GM13976 (cell line): ENCODE measurements at regions of chr15 and their contacts with region 1.

Region 1: GRCh38 chr15:51982013-51982769 is 10.6 kb upstream of the LEO1 start:
- DNase-seq: peak; percentile 78
- CTCF ChIP-seq: peak; percentile 49

Region 2: DNA sequence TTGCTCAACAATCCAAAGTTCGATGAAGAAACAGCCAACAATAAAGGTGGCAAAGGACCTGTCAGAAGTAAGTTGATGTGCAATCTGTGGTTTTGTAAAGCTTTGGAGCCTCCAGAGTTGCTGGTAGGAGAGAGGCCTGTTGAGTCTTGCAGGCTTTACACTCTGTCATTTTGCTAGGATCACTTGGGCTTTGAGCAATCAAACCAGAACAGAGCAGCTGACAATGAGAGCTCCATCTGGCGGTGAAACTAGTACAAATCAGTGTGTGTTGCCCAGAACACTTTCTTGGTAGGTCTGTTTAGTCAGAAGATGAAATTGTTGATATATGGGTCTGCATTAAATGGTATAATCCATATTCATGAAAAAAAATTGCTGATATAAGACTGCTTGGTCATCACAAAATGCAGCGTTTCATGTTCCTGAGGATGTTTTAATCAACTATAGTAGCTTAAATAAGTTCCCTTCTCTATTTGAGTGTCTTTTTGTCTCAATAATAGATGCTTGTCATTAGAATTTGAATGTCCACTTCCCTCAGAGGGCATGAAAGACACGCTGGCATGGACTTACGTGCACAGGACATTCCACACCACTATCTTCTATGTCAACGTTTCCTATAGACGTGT is 205.1 kb before region 1 on chr15:
- in situ Hi-C with region 1: no loop called
- DNase-seq: peak; percentile 75
- CTCF ChIP-seq: peak; percentile 68

Region 3: DNA sequence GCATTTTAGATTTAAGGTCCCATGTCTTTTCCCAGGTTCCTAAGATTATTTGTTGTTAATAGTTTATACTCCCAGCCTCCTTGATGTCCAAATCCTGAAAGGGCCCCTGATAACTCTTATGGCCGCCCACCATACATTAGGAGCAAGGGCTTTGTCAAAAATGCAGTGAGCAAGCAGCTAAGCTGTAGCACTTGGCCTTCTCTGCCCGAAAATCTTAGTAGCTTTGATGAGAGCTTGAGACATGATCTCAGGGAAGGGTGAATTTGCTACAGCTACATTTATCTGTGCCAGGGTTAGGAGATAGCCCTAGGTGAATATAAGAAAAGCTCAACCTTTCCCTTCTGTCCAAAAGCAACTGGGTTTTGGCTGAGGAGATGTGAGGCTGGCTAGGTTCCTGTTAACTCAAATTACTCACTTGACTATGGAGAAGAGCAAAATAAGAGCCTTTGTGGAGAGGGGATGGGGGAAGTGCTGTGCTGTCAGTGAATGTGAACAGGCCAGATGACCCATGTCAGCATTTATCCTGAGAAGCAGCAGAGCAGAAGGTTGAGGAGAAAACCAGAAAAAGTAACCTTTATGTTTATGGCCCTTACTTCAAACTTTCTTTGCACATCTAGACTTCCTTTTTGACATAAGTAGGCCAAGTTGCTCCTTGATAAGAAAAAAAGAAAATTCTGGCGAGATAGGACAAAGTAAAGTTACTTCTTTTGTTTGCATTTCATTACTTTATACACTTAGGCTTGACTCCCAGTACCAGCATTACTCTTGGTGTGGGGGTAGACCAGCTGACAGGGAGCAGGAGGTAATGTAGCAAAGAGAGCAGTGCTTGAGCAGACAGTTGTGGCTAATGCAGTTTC is 58.0 kb after region 1 on chr15:
- in situ Hi-C with region 1: no loop called
- DNase-seq: no peak
- CTCF ChIP-seq: no peak

Region 4: DNA sequence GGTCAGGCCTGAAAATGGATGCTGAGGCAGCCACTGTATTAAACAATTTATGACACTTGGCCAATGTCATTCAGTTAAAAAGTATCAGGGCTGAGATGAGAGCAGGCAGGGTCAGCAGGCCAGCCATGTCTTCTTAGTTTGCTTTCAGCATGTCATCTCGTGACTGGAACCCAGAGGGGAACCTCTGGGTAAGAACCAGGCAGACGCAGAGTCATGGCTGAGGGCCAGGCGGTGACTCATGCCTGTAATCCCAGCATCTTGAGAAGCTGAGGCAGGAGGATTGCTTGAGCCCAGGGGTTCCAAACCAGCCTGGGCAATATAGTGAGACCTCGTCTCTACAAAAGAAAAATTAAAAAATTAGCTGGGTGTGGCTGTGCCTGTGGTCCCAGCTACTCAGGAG is 118.6 kb after region 1 on chr15:
- in situ Hi-C with region 1: no loop called
- DNase-seq: no peak
- CTCF ChIP-seq: no peak

Region 5: GRCh38 chr15:52139599-52140491 is 157.7 kb after region 1 on chr15:
- in situ Hi-C with region 1: loop called (anchors 10 kb)
- DNase-seq: peak; percentile 89
- CTCF ChIP-seq: peak; percentile 83

Region 6: GRCh38 chr15:52154896-52155865 is 173.0 kb after region 1 on chr15:
- in situ Hi-C with region 1: no loop called
- DNase-seq: no peak
- CTCF ChIP-seq: no peak